BJ (cell line): ENCODE measurements at regions of chr14 and their contacts with region 1.

Region 1: DNA sequence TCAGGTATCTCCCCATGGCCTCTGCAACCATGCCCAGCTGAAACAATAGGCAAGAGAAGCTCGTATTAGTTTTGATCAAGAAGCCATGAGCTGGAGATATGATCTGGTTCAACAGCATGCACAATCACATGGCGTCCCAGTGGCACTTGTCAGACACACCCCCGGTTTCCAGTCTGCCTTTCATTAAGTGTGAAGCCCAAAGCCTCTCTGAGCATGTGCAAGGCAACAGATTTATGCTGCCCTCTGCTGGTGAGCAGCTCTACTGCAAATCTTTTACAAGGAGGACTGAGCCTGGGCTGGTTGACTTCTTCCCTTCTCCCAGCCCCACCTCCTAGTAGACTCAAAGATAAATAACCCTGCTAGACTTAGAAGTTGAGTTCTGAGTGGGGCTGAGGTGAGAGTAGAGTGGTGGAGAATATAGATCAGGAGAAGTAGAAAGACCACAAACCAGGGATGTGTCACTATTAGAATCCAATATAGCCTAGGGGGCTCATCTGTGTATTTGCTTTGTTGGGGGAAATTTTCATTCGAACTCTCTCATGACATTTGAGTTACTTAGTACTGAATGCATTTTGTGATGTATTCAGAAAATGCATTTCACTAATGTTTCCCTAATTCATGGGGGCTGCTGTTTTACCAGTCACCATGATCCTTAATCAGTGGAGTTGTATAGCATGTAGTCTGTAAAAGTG is 53.7 kb upstream of the MBIP start:
- DNase-seq: peak; percentile 9
- H3K4me3 ChIP-seq: no peak overlapping the region
- H3K27me3 ChIP-seq: no peaks in the 10 kb centered on the region
- CTCF ChIP-seq: peak; percentile 91

Region 2: DNA sequence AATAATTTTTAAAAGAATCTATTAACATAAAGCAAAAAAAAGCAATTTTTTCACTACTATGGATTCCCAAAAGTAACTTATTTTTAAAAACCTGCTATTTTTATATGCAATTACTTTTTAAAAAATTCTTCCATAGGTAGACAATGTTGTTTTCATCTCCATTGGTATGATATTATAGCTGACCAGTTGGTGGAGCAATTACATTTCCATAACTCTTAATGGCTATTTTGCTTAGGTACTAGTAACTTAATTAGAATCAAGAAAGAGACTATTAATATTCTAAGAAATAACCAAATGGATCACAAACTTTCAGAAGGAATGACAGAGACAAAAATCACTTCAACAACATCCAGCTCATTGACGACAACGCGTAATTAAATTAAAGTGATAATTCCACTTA is 132.9 kb before region 1 on chr14:
- CTCF ChIA-PET with region 1: interaction called, 18 read pairs
- POLR2A ChIA-PET with region 1: interaction called, 3 read pairs
- DNase-seq: no peak
- H3K4me3 ChIP-seq: no peak overlapping the region
- H3K27me3 ChIP-seq: no peaks in the 10 kb centered on the region
- CTCF ChIP-seq: 0 out of 2 replicates have a peak, but pooled peaks have one; percentile 3

Region 3: GRCh38 chr14:36398463-36399260 is 24.5 kb after region 1 on chr14:
- CTCF ChIA-PET with region 1: interaction called, 12 read pairs
- POLR2A ChIA-PET with region 1: no interaction called
- DNase-seq: no peak
- H3K4me3 ChIP-seq: no peak overlapping the region
- H3K27me3 ChIP-seq: no peaks in the 10 kb centered on the region
- CTCF ChIP-seq: no peak

Region 4: GRCh38 chr14:36493761-36494160 is 119.6 kb after region 1 on chr14:
- CTCF ChIA-PET with region 1: no interaction called
- POLR2A ChIA-PET with region 1: no interaction called
- DNase-seq: no peak
- H3K4me3 ChIP-seq: no peak overlapping the region
- H3K27me3 ChIP-seq: no peaks in the 10 kb centered on the region; the same call in 1 of the 2 replicates
- CTCF ChIP-seq: no peak